CD8-positive, alpha-beta T cell (primary cell): ENCODE measurements at regions of chr13 and their contacts with region 1.

Region 1: GRCh38 chr13:29081036-29081435 is 260.9 kb downstream of the MTUS2 start:
- DNase-seq: peak in 3 of 9 experiments; percentile 24 to 61 (median 39)
- ATAC-seq: no peak
- H3K4me3 ChIP-seq: no peak overlapping the region
- H3K4me3 Mint-ChIP-seq: no peak overlapping the region
- H3K27ac ChIP-seq: no peak overlapping the region
- H3K27ac Mint-ChIP-seq: no peak overlapping the region
- H3K4me1 ChIP-seq: peaks cover 12% of the 10 kb centered on the region
- H3K4me1 Mint-ChIP-seq: peaks cover 9% of the 10 kb centered on the region
- H3K27me3 ChIP-seq: no peaks in the 10 kb centered on the region
- H3K27me3 Mint-ChIP-seq: no peaks in the 10 kb centered on the region
- CTCF ChIP-seq: no peak

Region 2: GRCh38 chr13:29362849-29363604 is 282.0 kb after region 1 on chr13:
- CTCF ChIA-PET with region 1: no interaction called
- POLR2A ChIA-PET with region 1: no interaction called
- intact Hi-C with region 1: loop called (anchors 2 to 5 kb)
- DNase-seq: peak in 6 of 9 experiments; percentile 9 to 56 (median 28)
- ATAC-seq: peak; percentile 48
- H3K4me3 ChIP-seq: no peak overlapping the region
- H3K4me3 Mint-ChIP-seq: no peak overlapping the region
- H3K27ac ChIP-seq: no peak overlapping the region
- H3K27ac Mint-ChIP-seq: no peak overlapping the region
- H3K4me1 ChIP-seq: no peaks in the 10 kb centered on the region
- H3K4me1 Mint-ChIP-seq: peaks cover 4% of the 10 kb centered on the region
- H3K27me3 ChIP-seq: no peaks in the 10 kb centered on the region
- H3K27me3 Mint-ChIP-seq: peaks cover 20% of the 10 kb centered on the region
- CTCF ChIP-seq: peak; percentile 69

Region 3: GRCh38 chr13:29384466-29384865 is 303.4 kb after region 1 on chr13:
- CTCF ChIA-PET with region 1: no interaction called
- POLR2A ChIA-PET with region 1: no interaction called
- intact Hi-C with region 1: no loop called
- DNase-seq: no peak
- ATAC-seq: no peak
- H3K4me3 ChIP-seq: no peak overlapping the region
- H3K4me3 Mint-ChIP-seq: no peak overlapping the region
- H3K27ac ChIP-seq: no peak overlapping the region
- H3K27ac Mint-ChIP-seq: no peak overlapping the region
- H3K4me1 ChIP-seq: no peaks in the 10 kb centered on the region
- H3K4me1 Mint-ChIP-seq: no peaks in the 10 kb centered on the region
- H3K27me3 ChIP-seq: no peaks in the 10 kb centered on the region
- H3K27me3 Mint-ChIP-seq: peaks cover 5% of the 10 kb centered on the region
- CTCF ChIP-seq: no peak